Ascending aorta (tissue), 2 donors: ENCODE measurements at regions of chr3 and their contacts with region 1.

Region 1: DNA sequence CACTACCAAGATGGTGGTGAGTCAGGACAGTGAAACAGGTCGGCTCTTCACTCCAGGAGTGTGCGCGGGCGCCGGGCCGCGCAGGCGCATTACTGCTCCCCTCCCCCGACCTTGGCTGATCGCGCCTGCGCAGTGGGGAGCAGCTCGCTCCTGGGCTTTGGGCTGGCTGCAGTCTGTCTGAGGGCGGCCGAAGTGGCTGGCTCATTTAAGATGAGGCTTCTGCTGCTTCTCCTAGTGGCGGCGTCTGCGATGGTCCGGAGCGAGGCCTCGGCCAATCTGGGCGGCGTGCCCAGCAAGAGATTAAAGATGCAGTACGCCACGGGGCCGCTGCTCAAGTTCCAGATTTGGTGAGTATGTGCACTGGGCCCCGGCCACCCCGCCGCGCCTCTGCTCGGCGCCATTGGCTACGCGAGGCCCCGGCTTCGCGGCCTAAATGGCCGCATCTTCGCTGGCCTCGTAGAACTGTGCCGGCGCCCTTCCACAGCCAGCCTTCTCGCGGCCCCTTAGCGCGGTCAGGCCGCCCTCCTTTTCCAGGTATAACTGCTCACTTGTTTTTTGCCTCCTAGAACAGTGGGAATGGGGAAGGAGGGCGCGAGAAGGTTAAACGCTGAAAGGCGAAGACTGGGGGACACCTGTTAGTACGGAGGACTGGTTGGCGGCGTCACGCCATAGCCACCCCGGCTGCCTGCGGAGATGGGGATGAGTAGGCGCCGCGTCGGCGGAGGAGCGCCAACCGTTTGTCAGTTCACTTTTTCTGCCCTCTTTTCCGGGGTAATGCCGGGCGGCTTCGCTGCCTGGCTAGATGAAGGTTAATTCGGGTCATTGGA is at the start of gene SELENOT:
- DNase-seq: peak; percentile 84 to 97
- H3K4me3 ChIP-seq: peak within 1 kb of the TSS; percentile 80 to 83
- H3K27ac ChIP-seq: peak within 1 kb of the TSS; percentile 95 to 96
- H3K4me1 ChIP-seq: peaks cover 8 to 21% of the 10 kb centered on the region in 2 donors
- H3K27me3 ChIP-seq: no peaks in the 10 kb centered on the region
- CTCF ChIP-seq: peak in 1 of 3 experiments; percentile 30
- total RNA-seq, gene SELENOT: 112 TPM

Region 2: DNA sequence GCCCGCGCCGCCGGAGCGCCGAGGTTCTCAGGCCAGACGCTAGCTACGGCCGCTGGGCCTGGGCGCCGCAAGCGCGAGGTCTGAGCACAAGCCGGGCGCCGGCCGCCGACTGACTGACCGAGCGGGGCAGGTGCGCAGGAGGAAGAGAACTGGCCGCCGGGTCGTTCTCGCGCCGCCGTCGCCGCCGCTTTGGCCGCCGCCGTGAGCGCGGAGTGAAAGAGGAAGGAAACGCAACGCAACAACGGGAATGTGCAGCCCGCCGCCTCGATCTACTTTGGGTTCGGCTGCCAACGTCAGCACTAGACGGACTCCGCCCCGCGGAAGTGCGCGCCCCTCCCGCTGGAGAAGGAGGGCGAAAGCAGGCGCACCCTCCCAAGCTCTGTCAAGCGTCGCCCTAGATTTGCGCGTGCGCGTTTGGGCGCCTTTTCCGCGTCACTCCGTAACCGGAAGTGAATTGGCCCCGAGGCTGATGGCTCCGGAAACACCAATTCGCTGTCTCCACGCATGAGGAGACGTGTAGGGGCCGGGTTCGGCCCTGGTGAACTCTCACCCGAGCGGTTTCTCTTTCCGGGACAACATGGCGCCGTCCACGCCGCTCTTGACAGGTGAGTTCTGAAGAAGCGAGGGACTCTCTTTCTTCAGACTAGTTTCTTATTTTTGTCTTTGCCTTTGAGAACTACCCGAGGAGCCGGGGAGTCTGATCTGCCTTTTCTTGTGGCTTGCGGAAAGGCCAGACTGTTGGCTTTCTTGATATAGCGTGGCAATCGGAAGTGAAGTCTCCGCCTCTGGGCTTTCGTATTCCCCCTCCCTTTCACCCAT is 56.9 kb before region 1 on chr3 and contains the starts of genes EIF2A and SERP1:
- intact Hi-C with region 1: loop called (anchors 1 kb)
- DNase-seq: peak; percentile 94 to 99
- H3K4me3 ChIP-seq: peak within 1 kb of the TSS; percentile 89 to 99
- H3K27ac ChIP-seq: peak within 1 kb of the TSS; percentile 99 to 100
- H3K4me1 ChIP-seq: peaks cover 0 to 24% of the 10 kb centered on the region in 2 donors
- H3K27me3 ChIP-seq: no peaks in the 10 kb centered on the region
- CTCF ChIP-seq: no peak
- total RNA-seq, gene EIF2A: 83.2 TPM
- total RNA-seq, gene SERP1: 237 TPM

Region 3: GRCh38 chr3:150577859-150578258 is 25.5 kb before region 1 on chr3:
- intact Hi-C with region 1: no loop called
- DNase-seq: no peak
- H3K4me3 ChIP-seq: no peak overlapping the region
- H3K27ac ChIP-seq: no peak overlapping the region
- H3K4me1 ChIP-seq: no peaks in the 10 kb centered on the region
- H3K27me3 ChIP-seq: no peaks in the 10 kb centered on the region
- CTCF ChIP-seq: no peak